ENCODE measurements at regions of chr15 and their contacts with region 1.

Region 1: GRCh38 chr15:44536962-44537734 is at the start of gene EIF3J:
- DNase-seq: peak; percentile 96
- H3K4me3 ChIP-seq: peak within 1 kb of the TSS; percentile 75 to 95
- H3K27ac ChIP-seq: peak within 1 kb of the TSS; percentile 94
- H3K4me1 ChIP-seq: peaks cover 1% of the 10 kb centered on the region
- H3K27me3 ChIP-seq: no peaks in the 10 kb centered on the region
- CTCF ChIP-seq: peak in 1 of 4 experiments; percentile 35
- POLR2A ChIP-seq: peak; percentile 70
- total RNA-seq, gene EIF3J: 33.1 to 51.7 TPM

Region 2: DNA sequence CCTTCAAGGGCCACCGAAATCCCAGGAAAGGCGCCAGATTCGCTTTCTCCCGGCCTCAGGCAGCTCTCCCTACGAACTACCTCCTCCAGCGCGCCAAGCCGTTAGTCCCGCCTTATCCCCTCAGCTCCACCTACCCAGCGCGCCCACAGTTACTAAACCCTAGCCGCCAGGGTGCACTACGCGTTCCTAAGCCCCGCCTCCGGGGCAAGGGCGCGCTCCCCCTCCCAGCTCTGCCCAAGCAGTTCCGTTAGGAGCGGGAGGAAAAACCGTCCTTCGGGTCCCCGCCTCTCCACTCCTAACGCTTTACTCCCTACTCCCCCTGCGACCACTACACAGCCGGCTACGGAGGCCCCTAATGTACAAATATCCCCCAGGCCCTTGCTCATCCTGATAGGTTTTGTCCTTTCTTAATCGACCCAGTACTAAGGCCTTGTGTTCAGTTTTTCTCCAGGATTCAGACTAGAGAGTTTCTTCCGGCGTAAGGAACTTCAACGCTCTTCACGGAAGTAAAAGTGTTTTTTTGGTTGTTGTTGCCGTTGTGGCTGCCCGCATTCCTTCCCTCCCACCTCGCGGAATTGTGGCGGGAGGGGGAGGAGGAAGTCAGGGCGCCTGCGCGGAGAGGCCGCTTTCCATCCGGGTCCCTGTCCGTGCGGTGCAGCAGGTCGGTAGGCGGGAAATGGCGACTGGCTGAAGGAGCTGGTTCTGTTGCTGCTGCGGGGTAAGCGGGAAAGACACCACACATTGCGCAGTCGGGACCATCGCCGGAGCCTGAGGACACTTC is 110.0 kb before region 1 on chr15 and contains the start of gene CTDSPL2:
- intact Hi-C with region 1: loop called (anchors 2 kb)
- DNase-seq: peak; percentile 98
- H3K4me3 ChIP-seq: peak within 1 kb of the TSS; percentile 61 to 68
- H3K27ac ChIP-seq: peak within 1 kb of the TSS; percentile 92 to 94
- H3K4me1 ChIP-seq: no peaks in the 10 kb centered on the region
- H3K27me3 ChIP-seq: no peaks in the 10 kb centered on the region
- CTCF ChIP-seq: peak in 3 of 4 experiments; percentile 34 to 63 (median 50)
- POLR2A ChIP-seq: peak; percentile 48
- total RNA-seq, gene CTDSPL2: 32.5 to 67.5 TPM

Measured in prostate gland (tissue), 2 donors.